K562 (cell line): ENCODE measurements at regions of chr17 and their contacts with region 1.

Region 1: GRCh38 chr17:82236142-82236981 is 7.5 kb downstream of the SLC16A3 start:
- DNase-seq: peak; percentile 72 to 87 (median 76)
- ATAC-seq: peak; percentile 58
- H3K4me3 ChIP-seq: no peak overlapping the region
- H3K27ac ChIP-seq: peak overlapping the region; percentile 77; the same call in 2 of the 3 replicates
- H3K4me1 ChIP-seq: peaks cover 53 to 97% of the 10 kb centered on the region in 2 experiments
- H3K27me3 ChIP-seq: no peaks in the 10 kb centered on the region
- CTCF ChIP-seq: peak; percentile 90 to 95 (median 90)
- EP300 ChIP-seq: no peak
- POLR2A ChIP-seq: no peak
- RAD21 ChIP-seq: peak; percentile 84 to 92

Region 2: GRCh38 chr17:82088838-82089722 is 147.3 kb before region 1 on chr17:
- CTCF ChIA-PET with region 1: no interaction called
- POLR2A ChIA-PET with region 1: no interaction called
- in situ Hi-C with region 1: no loop called
- intact Hi-C with region 1: no loop called
- DNase-seq: no peak
- ATAC-seq: no peak
- H3K4me3 ChIP-seq: no peak overlapping the region
- H3K27ac ChIP-seq: no peak overlapping the region
- H3K4me1 ChIP-seq: peaks cover 0 to 63% of the 10 kb centered on the region in 2 experiments; a peak in 1 of 5 replicates
- H3K27me3 ChIP-seq: no peaks in the 10 kb centered on the region
- CTCF ChIP-seq: no peak
- EP300 ChIP-seq: no peak
- POLR2A ChIP-seq: peak; percentile 49; the same call in 1 of the 2 replicates
- RAD21 ChIP-seq: no peak

Region 3: GRCh38 chr17:82257473-82257872 is 21.1 kb after region 1 on chr17:
- CTCF ChIA-PET with region 1: no interaction called
- POLR2A ChIA-PET with region 1: interaction called, 20 read pairs
- in situ Hi-C with region 1: no loop called
- intact Hi-C with region 1: no loop called
- DNase-seq: peak in 2 of 4 experiments; percentile 62 to 73
- ATAC-seq: peak; percentile 69
- H3K4me3 ChIP-seq: no peak overlapping the region
- H3K27ac ChIP-seq: no peak overlapping the region
- H3K4me1 ChIP-seq: 0 out of 5 replicates have a peak, but pooled peaks cover 0 to 3% of the 10 kb centered on the region in 2 experiments
- H3K27me3 ChIP-seq: no peaks in the 10 kb centered on the region
- CTCF ChIP-seq: no peak
- EP300 ChIP-seq: no peak
- POLR2A ChIP-seq: no peak
- RAD21 ChIP-seq: no peak

Region 4: GRCh38 chr17:82304826-82305726 is 68.7 kb after region 1 on chr17:
- CTCF ChIA-PET with region 1: no interaction called
- POLR2A ChIA-PET with region 1: no interaction called
- in situ Hi-C with region 1: loop called (anchors 5 kb)
- intact Hi-C with region 1: no loop called
- DNase-seq: peak in 1 of 4 experiments; percentile 26
- ATAC-seq: peak; percentile 24
- H3K4me3 ChIP-seq: no peak overlapping the region
- H3K27ac ChIP-seq: no peak overlapping the region
- H3K4me1 ChIP-seq: peaks cover 39 to 68% of the 10 kb centered on the region in 2 experiments
- H3K27me3 ChIP-seq: no peaks in the 10 kb centered on the region
- CTCF ChIP-seq: 0 out of 6 replicates have a peak, but pooled peaks of 1 of the 3 experiments have one; percentile 0
- EP300 ChIP-seq: no peak
- POLR2A ChIP-seq: no peak
- RAD21 ChIP-seq: 0 out of 4 replicates have a peak, but pooled peaks of 1 of the 2 experiments have one; percentile 4

Region 5: DNA sequence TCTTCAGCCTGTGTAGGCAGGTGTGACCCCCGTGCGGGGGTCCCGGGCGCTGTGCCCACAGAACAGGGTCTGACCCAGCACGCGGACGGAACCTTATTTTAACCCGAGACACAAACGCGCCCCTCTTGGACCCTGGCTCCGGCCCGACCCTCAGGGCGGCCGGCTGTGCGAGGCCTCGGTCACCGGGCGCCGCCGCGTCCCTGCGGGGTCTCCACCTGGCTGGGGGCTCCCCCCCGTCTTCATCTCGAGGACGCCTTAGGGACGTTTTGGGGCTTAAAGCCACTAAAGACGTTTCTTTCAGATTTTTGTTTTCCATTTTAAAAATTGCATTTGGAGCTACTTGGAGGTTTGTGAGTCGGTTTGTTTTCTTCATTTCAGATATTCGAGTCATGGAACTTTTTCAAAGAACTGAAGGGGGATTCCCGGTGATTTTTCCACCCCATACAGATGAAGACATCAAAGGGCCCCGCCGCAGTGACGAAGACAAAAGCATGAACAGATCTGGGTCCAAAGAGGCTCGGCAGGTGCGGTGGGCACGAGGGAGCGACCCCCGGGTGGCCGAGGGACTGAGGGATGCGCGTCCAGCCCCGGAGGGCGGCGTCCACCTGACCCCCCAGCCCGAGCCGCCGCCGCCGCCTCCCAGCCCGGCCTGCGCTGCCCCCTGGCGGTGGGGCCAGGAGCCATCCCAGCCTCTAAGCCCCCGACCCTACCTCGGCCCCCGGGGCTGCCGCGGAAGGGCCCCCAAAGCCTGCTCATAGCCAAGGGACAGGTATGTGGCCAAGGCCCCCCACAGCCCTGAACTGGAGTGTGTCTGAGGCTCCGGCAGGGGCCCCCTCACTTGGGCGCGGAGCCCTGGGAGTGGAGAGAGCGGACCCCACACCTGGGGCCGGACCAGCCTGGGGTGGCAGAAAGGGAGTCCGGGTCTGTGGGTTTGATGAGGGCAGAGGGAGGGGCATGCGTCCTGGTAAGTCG is 84.9 kb after region 1 on chr17:
- CTCF ChIA-PET with region 1: interaction called, 18 read pairs
- POLR2A ChIA-PET with region 1: interaction called, 3 read pairs
- in situ Hi-C with region 1: no loop called
- intact Hi-C with region 1: loop called (anchors 2 kb)
- DNase-seq: peak; percentile 66 to 87 (median 83)
- ATAC-seq: peak; percentile 87
- H3K4me3 ChIP-seq: no peak overlapping the region
- H3K27ac ChIP-seq: no peak overlapping the region
- H3K4me1 ChIP-seq: peaks cover 43 to 99% of the 10 kb centered on the region in 2 experiments
- H3K27me3 ChIP-seq: no peaks in the 10 kb centered on the region
- CTCF ChIP-seq: peak; percentile 65 to 87 (median 77)
- EP300 ChIP-seq: no peak
- POLR2A ChIP-seq: no peak
- RAD21 ChIP-seq: peak; percentile 88 to 92

Region 6: GRCh38 chr17:82338858-82339633 is 102.7 kb after region 1 on chr17:
- CTCF ChIA-PET with region 1: no interaction called
- POLR2A ChIA-PET with region 1: interaction called, 5 read pairs
- in situ Hi-C with region 1: no loop called
- intact Hi-C with region 1: loop called (anchors 5 kb)
- DNase-seq: peak; percentile 76 to 89 (median 80)
- ATAC-seq: peak; percentile 88
- H3K4me3 ChIP-seq: peak overlapping the region; percentile 13; the same call in 1 of the 2 replicates
- H3K27ac ChIP-seq: peak overlapping the region; percentile 87
- H3K4me1 ChIP-seq: peaks cover 40 to 74% of the 10 kb centered on the region in 2 experiments
- H3K27me3 ChIP-seq: no peaks in the 10 kb centered on the region
- CTCF ChIP-seq: no peak
- EP300 ChIP-seq: no peak
- POLR2A ChIP-seq: no peak
- RAD21 ChIP-seq: no peak

Region 7: GRCh38 chr17:82356845-82357355 is 120.5 kb after region 1 on chr17:
- CTCF ChIA-PET with region 1: no interaction called
- POLR2A ChIA-PET with region 1: no interaction called
- in situ Hi-C with region 1: no loop called
- intact Hi-C with region 1: no loop called
- DNase-seq: no peak
- ATAC-seq: peak; percentile 74
- H3K4me3 ChIP-seq: no peak overlapping the region
- H3K27ac ChIP-seq: no peak overlapping the region
- H3K4me1 ChIP-seq: peaks cover 7 to 34% of the 10 kb centered on the region in 2 experiments; a peak in 4 of 5 replicates
- H3K27me3 ChIP-seq: no peaks in the 10 kb centered on the region
- CTCF ChIP-seq: no peak
- EP300 ChIP-seq: no peak
- POLR2A ChIP-seq: no peak
- RAD21 ChIP-seq: no peak

Region 8: DNA sequence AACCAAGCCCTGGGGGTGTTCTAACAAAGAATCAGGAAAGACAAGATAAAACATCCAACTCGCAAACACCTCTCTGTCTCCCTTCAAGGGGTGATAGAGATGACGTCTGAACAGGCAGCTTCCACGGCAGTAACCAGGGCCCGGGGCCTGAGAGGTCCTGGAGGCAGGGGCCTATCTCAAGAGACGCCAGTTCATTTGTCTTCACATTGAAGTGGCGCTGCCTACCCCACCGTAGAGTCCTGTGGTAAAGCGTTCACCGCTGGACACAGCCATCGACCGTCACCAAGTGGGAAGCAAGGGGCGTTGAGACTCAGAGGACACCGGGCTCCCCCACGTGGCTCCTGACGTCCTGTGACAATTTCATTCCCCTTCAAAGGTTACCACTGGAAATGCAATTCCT is 156.6 kb after region 1 on chr17:
- CTCF ChIA-PET with region 1: no interaction called
- POLR2A ChIA-PET with region 1: no interaction called
- in situ Hi-C with region 1: no loop called
- intact Hi-C with region 1: no loop called
- DNase-seq: no peak
- ATAC-seq: no peak
- H3K4me3 ChIP-seq: no peak overlapping the region
- H3K27ac ChIP-seq: no peak overlapping the region
- H3K4me1 ChIP-seq: peaks cover 0 to 33% of the 10 kb centered on the region in 2 experiments; a peak in 2 of 5 replicates
- H3K27me3 ChIP-seq: no peaks in the 10 kb centered on the region
- CTCF ChIP-seq: no peak
- EP300 ChIP-seq: no peak
- POLR2A ChIP-seq: no peak
- RAD21 ChIP-seq: no peak

Region 9: DNA sequence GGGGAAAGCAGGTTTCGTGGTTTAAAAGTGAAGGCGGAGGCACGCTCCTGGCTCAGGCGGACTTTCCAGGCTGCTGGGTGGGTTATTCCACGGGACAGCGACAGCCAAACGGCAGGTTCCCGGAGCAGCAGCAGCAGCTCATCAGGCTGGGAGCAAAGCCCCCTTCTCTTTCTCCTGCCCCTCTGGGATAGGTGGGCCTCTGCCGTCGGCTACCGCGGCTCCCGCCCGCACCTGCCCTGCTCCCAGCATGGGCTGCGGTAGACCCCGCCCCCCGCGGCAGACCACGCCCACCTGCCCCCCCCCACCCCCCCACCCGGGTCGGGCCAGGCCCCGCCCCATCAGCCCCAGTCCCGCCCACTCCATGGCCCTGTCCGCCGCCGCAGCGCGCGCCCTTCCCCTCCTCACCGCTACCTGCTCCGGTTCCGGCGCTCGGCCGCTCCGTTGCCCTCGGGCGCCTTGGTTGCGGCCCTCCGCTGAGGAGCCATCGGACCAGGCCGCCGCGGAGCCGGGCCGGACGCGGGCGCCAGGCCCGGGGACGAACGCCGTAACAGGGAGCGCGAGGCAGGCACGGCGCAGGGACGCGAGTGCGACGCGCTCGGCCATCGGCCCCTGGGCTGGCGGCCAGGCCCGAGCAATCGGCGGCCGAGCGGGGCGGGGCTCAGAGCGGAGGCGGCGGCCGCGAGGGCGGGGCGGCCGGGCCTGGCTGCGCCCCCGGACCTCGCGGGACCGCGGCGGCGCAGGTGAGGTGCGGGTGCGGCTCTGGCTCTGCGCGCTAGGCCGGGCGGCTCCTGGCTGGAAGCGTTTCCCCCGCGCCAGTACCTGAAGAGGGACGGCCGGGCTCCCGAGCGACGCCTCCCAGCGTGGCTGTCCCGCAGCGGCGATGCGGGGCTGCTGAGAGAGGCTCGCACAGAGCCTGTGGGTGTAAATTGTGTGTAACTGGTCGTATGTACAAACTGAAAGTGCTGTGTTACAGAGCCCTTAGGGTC is 181.9 kb after region 1 on chr17 and contains the starts of genes HEXD and OGFOD3:
- CTCF ChIA-PET with region 1: no interaction called
- POLR2A ChIA-PET with region 1: no interaction called
- in situ Hi-C with region 1: no loop called
- intact Hi-C with region 1: loop called (anchors 2 kb)
- DNase-seq: peak; percentile 91 to 100 (median 100)
- ATAC-seq: peak; percentile 85
- H3K4me3 ChIP-seq: peak within 1 kb of the TSS; percentile 90
- H3K27ac ChIP-seq: peak within 1 kb of the TSS; percentile 92
- H3K4me1 ChIP-seq: peaks cover 8 to 19% of the 10 kb centered on the region in 2 experiments
- H3K27me3 ChIP-seq: no peaks in the 10 kb centered on the region
- CTCF ChIP-seq: no peak
- EP300 ChIP-seq: no peak
- POLR2A ChIP-seq: peak; percentile 87
- RAD21 ChIP-seq: 0 out of 4 replicates have a peak, but pooled peaks of 1 of the 2 experiments have one; percentile 2
- polyA plus RNA-seq, gene HEXD: 1.0 TPM
- polyA plus RNA-seq, gene OGFOD3: 0.69 to 1.8 TPM